ENCODE measurements at regions of chr15 and their contacts with region 1.

Region 1: GRCh38 chr15:31128919-31129768 is 27.6 kb upstream of the TRPM1 start:
- DNase-seq: peak; percentile 55 to 62
- ATAC-seq: peak; percentile 90 to 94
- H3K4me3 ChIP-seq: peak overlapping the region; percentile 22; the same call in 1 of the 3 replicates
- H3K27ac ChIP-seq: no peak overlapping the region
- H3K4me1 ChIP-seq: 0 out of 3 replicates have a peak, but pooled peaks cover 3% of the 10 kb centered on the region
- CTCF ChIP-seq: peak; percentile 97
- EP300 ChIP-seq: no peak
- POLR2A ChIP-seq: no peak
- RAD21 ChIP-seq: peak; percentile 96 to 97

Region 2: GRCh38 chr15:30896211-30896606 is 232.9 kb before region 1 on chr15:
- CTCF ChIA-PET with region 1: interaction called, 13 read pairs
- POLR2A ChIA-PET with region 1: no interaction called
- DNase-seq: no peak
- ATAC-seq: peak in 1 of 2 experiments; percentile 68; a peak in 3 of 6 replicates
- H3K4me3 ChIP-seq: no peak overlapping the region
- H3K27ac ChIP-seq: no peak overlapping the region
- H3K4me1 ChIP-seq: 0 out of 3 replicates have a peak, but pooled peaks cover 3% of the 10 kb centered on the region
- CTCF ChIP-seq: no peak
- EP300 ChIP-seq: no peak
- POLR2A ChIP-seq: no peak
- RAD21 ChIP-seq: no peak

Region 3: GRCh38 chr15:30917013-30917412 is 212.1 kb before region 1 on chr15:
- CTCF ChIA-PET with region 1: interaction called, 15 read pairs
- POLR2A ChIA-PET with region 1: no interaction called
- DNase-seq: no peak
- ATAC-seq: no peak
- H3K4me3 ChIP-seq: no peak overlapping the region
- H3K27ac ChIP-seq: no peak overlapping the region
- H3K4me1 ChIP-seq: no peaks in the 10 kb centered on the region
- CTCF ChIP-seq: no peak
- EP300 ChIP-seq: no peak
- POLR2A ChIP-seq: no peak
- RAD21 ChIP-seq: no peak

Region 4: GRCh38 chr15:31004220-31004733 is 124.9 kb before region 1 on chr15:
- CTCF ChIA-PET with region 1: interaction called, 10 read pairs
- POLR2A ChIA-PET with region 1: no interaction called
- DNase-seq: no peak
- ATAC-seq: 0 out of 6 replicates have a peak, but pooled peaks of 1 of the 2 experiments have one; percentile 45
- H3K4me3 ChIP-seq: no peak overlapping the region
- H3K27ac ChIP-seq: no peak overlapping the region
- H3K4me1 ChIP-seq: no peaks in the 10 kb centered on the region
- CTCF ChIP-seq: no peak
- EP300 ChIP-seq: no peak
- POLR2A ChIP-seq: no peak
- RAD21 ChIP-seq: no peak

Region 5: DNA sequence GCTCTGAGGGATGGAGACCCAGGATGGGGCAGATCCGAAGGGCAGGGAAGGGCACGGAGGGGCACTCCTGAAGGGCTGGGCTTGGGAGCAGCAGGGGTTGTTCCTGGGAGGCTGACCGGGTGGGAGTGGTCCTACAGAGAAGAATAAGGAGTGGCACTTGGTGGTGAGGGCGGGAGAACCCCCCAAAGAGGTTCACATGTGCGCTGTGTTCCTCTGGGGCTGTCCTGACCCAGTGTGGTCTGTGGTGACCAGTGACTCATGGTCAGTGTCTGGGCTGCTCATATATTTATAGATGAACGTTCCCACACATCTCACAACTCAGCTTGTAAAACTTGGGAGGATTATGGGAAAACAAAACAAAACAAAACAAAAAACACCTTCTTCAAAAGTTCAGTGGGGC is 37.7 kb before region 1 on chr15:
- CTCF ChIA-PET with region 1: interaction called, 22 read pairs
- POLR2A ChIA-PET with region 1: no interaction called
- DNase-seq: peak in 1 of 2 experiments; percentile 44
- ATAC-seq: peak; percentile 62 to 68; a peak in 5 of 6 replicates
- H3K4me3 ChIP-seq: no peak overlapping the region
- H3K27ac ChIP-seq: peak overlapping the region; percentile 2 to 63; a peak in 3 of 6 replicates
- H3K4me1 ChIP-seq: peaks cover 21% of the 10 kb centered on the region
- CTCF ChIP-seq: no peak
- EP300 ChIP-seq: no peak
- POLR2A ChIP-seq: no peak
- RAD21 ChIP-seq: no peak

Region 6: GRCh38 chr15:31111091-31111647 is 18.0 kb before region 1 on chr15:
- CTCF ChIA-PET with region 1: interaction called, 91 read pairs
- POLR2A ChIA-PET with region 1: no interaction called
- DNase-seq: no peak
- ATAC-seq: no peak
- H3K4me3 ChIP-seq: no peak overlapping the region
- H3K27ac ChIP-seq: no peak overlapping the region
- H3K4me1 ChIP-seq: no peaks in the 10 kb centered on the region
- CTCF ChIP-seq: no peak
- EP300 ChIP-seq: no peak
- POLR2A ChIP-seq: no peak
- RAD21 ChIP-seq: no peak

Region 7: DNA sequence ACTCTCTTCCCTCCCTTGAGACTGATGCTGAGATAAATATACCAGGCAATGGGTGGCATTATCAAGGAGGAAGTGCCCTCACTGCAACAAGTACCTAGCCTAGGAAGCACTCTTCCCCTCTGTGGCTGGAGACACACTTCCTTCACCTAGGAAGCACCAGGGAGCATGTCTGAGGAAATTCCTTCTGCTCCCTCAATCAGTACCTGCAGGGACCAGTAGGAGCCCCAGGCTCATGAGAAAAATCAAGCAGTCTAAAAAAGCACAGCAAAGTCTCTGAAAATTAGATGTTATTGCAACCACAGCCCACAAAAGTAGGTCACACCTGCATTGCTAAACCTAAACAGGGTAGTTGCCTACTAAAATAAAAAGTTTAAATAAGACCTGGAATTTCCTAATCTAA is 50.5 kb after region 1 on chr15:
- CTCF ChIA-PET with region 1: no interaction called
- POLR2A ChIA-PET with region 1: no interaction called
- DNase-seq: no peak
- ATAC-seq: peak; percentile 55 to 57; a peak in 2 of 6 replicates
- H3K4me3 ChIP-seq: no peak overlapping the region
- H3K27ac ChIP-seq: no peak overlapping the region
- H3K4me1 ChIP-seq: no peaks in the 10 kb centered on the region
- CTCF ChIP-seq: no peak
- EP300 ChIP-seq: no peak
- POLR2A ChIP-seq: no peak
- RAD21 ChIP-seq: no peak

Region 8: DNA sequence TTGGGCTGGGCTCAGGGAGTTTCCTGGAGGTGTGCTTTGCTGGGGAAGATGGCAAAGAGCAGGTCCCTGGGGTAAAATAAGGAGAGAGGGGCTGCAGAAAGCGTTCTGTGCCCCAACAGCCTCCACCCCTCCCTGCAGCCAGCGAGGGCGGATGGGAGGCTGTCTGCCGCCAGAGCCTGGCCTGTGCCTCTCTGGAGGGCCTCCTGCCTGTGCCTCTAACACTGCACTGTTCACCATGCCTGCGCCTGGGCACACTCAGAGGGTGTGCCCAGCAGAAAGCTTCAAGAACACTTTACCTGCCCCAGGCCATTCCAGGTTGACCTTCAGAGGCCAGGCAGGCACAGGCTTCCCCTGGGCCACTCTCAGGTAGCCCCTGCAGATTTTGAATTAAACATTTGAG is 119.8 kb after region 1 on chr15:
- CTCF ChIA-PET with region 1: no interaction called
- POLR2A ChIA-PET with region 1: no interaction called
- DNase-seq: no peak
- ATAC-seq: no peak
- H3K4me3 ChIP-seq: no peak overlapping the region
- H3K27ac ChIP-seq: no peak overlapping the region
- H3K4me1 ChIP-seq: no peaks in the 10 kb centered on the region
- CTCF ChIP-seq: no peak
- EP300 ChIP-seq: no peak
- POLR2A ChIP-seq: no peak
- RAD21 ChIP-seq: no peak